Activated CD4-positive, alpha-beta memory T cell treated with anti-CD3 and anti-CD28 coated beads, Interleukin-2, amount 10 ng/mL, durations not matched to agents 7 days and 5 days (primary cell): ENCODE measurements at regions of chr7 and their contacts with region 1.

Region 1: DNA sequence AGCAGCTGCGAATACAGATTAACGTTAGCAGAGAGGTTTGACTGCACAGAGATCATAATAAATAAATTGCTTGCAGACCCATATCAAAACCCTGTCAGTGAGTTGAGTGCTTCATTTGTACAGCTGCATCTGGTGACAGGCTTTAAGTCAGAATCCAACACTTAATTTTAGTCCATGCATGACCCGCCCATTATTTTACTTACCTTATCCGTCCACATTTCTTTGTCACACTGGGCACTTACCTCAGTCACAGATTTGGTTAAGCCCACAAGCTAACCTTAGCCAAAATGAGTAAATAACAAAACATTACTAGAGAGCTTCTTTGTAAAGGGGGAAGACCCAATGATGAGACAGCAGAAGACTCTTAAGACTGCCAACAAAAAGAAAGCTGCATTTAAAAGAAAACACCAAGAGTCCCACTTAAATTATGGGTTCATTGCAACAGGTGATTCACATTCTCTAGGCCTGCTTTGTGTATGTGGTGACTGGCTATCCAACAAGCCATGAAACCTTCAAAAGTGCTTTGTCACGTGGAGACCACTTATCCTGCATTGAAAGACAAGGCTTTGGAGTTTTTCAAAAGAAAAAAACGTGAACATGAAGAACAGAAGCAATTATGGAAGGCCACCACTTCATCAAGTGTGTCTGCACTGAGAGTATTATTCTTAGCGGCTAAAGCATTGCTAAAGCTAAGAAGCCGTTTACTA is 32.2 kb downstream of the PHTF2 start:
- DNase-seq: no peak
- H3K4me3 Mint-ChIP-seq: no peak overlapping the region
- H3K27ac Mint-ChIP-seq: peak overlapping the region; percentile 84
- H3K4me1 Mint-ChIP-seq: peaks cover 72% of the 10 kb centered on the region
- H3K27me3 Mint-ChIP-seq: no peaks in the 10 kb centered on the region

Region 2: DNA sequence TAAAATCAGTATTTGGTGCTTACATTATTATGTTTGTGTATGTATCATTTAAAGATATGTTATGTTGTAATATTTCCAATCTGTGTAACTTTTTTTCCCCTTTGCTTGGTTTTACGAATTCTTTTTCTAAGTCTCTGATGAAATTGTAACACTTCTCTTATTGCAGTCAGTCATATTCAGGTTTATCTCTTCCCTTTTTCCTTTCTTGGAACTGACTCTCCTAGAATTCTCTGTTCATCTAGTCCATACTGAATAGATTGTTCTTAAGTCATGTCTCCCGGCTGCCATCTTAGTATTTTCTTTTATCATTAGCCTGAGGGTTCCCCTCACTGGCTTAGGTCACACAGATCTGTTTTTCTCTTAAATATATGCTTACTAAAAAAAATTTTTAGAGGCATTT is 12.4 kb after region 1 on chr7:
- CTCF ChIA-PET with region 1: no interaction called
- POLR2A ChIA-PET with region 1: interaction called, 14 read pairs
- DNase-seq: no peak
- H3K4me3 Mint-ChIP-seq: no peak overlapping the region
- H3K27ac Mint-ChIP-seq: no peak overlapping the region
- H3K4me1 Mint-ChIP-seq: peaks cover 26% of the 10 kb centered on the region
- H3K27me3 Mint-ChIP-seq: no peaks in the 10 kb centered on the region

Region 3: GRCh38 chr7:77950548-77950947 is 119.7 kb after region 1 on chr7:
- CTCF ChIA-PET with region 1: no interaction called
- POLR2A ChIA-PET with region 1: no interaction called
- DNase-seq: no peak
- H3K4me3 Mint-ChIP-seq: no peak overlapping the region
- H3K27ac Mint-ChIP-seq: no peak overlapping the region
- H3K4me1 Mint-ChIP-seq: peaks cover 11% of the 10 kb centered on the region
- H3K27me3 Mint-ChIP-seq: no peaks in the 10 kb centered on the region

Region 4: GRCh38 chr7:77975672-77976480 is 145.1 kb after region 1 on chr7:
- CTCF ChIA-PET with region 1: no interaction called
- POLR2A ChIA-PET with region 1: no interaction called
- DNase-seq: no peak
- H3K4me3 Mint-ChIP-seq: no peak overlapping the region
- H3K27ac Mint-ChIP-seq: no peak overlapping the region
- H3K4me1 Mint-ChIP-seq: peaks cover 4% of the 10 kb centered on the region
- H3K27me3 Mint-ChIP-seq: peaks cover 4% of the 10 kb centered on the region